PC-3 (cell line): ENCODE measurements at regions of chr12 and their contacts with region 1.

Region 1: GRCh38 chr12:39764944-39765560 is 145.4 kb upstream of the ABCD2 start:
- DNase-seq: peak; percentile 58
- ATAC-seq: peak; percentile 50
- H3K4me3 ChIP-seq: no peak overlapping the region
- H3K27ac ChIP-seq: no peak overlapping the region
- H3K4me1 ChIP-seq: no peaks in the 10 kb centered on the region
- H3K27me3 ChIP-seq: no peaks in the 10 kb centered on the region; the same call in 1 of the 2 replicates
- CTCF ChIP-seq: peak; percentile 91

Region 2: GRCh38 chr12:39587225-39587624 is 177.8 kb before region 1 on chr12:
- CTCF ChIA-PET with region 1: no interaction called
- POLR2A ChIA-PET with region 1: no interaction called
- intact Hi-C with region 1: loop called (anchors 5 kb)
- DNase-seq: peak; percentile 45
- ATAC-seq: peak; percentile 63; the same call in 1 of the 2 replicates
- H3K4me3 ChIP-seq: no peak overlapping the region
- H3K27ac ChIP-seq: no peak overlapping the region
- H3K4me1 ChIP-seq: peaks cover 6% of the 10 kb centered on the region
- H3K27me3 ChIP-seq: no peaks in the 10 kb centered on the region
- CTCF ChIP-seq: peak; percentile 52; the same call in 1 of the 2 replicates

Region 3: DNA sequence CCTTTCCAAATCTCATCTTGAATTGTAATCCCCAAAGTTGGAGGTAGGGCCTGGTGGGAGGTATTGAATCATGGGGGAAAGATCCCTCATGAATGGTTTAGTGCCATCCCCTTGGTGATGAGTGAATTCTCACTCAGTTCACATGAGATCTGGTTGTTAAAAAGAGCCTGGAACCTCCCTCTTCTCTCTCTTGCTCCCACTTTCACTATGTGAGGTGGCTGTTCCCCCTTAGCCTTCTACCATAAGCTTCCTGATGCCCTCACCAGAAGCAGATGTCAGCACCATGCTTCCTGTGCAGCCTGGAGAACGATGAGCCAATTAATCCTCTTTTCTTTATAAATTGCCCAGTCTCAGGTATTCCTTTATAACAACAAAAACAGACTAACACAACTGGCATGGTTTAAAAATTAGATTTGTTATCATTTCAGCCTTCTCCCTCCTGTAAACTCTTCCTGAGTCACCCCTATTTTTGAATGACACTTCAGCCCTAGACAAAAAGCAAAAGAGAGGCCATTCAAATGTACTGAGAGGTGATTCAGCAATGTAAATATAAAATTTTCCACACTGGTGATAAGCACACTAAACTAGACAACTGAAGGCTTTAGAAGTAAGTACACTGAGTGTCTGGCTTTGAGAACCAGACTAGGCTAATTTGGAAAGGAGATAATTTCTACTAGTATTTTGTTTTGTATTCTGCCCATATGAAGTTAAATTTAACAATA is 66.7 kb after region 1 on chr12:
- CTCF ChIA-PET with region 1: interaction called, 3 read pairs
- POLR2A ChIA-PET with region 1: no interaction called
- intact Hi-C with region 1: loop called (anchors 5 kb)
- DNase-seq: peak; percentile 75
- ATAC-seq: peak; percentile 94
- H3K4me3 ChIP-seq: no peak overlapping the region
- H3K27ac ChIP-seq: no peak overlapping the region
- H3K4me1 ChIP-seq: peaks cover 18% of the 10 kb centered on the region
- H3K27me3 ChIP-seq: no peaks in the 10 kb centered on the region
- CTCF ChIP-seq: no peak

Region 4: GRCh38 chr12:39958377-39958776 is 193.3 kb after region 1 on chr12:
- CTCF ChIA-PET with region 1: no interaction called
- POLR2A ChIA-PET with region 1: no interaction called
- intact Hi-C with region 1: loop called (anchors 1 kb)
- DNase-seq: peak; percentile 33
- ATAC-seq: peak; percentile 31; the same call in 1 of the 2 replicates
- H3K4me3 ChIP-seq: no peak overlapping the region
- H3K27ac ChIP-seq: no peak overlapping the region
- H3K4me1 ChIP-seq: no peaks in the 10 kb centered on the region
- H3K27me3 ChIP-seq: no peaks in the 10 kb centered on the region
- CTCF ChIP-seq: peak; percentile 56

Region 5: GRCh38 chr12:39990122-39991101 is 225.4 kb after region 1 on chr12:
- CTCF ChIA-PET with region 1: no interaction called
- POLR2A ChIA-PET with region 1: no interaction called
- intact Hi-C with region 1: loop called (anchors 1 kb)
- DNase-seq: peak; percentile 61
- ATAC-seq: peak; percentile 91
- H3K4me3 ChIP-seq: no peak overlapping the region
- H3K27ac ChIP-seq: no peak overlapping the region
- H3K4me1 ChIP-seq: no peaks in the 10 kb centered on the region
- H3K27me3 ChIP-seq: no peaks in the 10 kb centered on the region
- CTCF ChIP-seq: peak; percentile 86

Region 6: DNA sequence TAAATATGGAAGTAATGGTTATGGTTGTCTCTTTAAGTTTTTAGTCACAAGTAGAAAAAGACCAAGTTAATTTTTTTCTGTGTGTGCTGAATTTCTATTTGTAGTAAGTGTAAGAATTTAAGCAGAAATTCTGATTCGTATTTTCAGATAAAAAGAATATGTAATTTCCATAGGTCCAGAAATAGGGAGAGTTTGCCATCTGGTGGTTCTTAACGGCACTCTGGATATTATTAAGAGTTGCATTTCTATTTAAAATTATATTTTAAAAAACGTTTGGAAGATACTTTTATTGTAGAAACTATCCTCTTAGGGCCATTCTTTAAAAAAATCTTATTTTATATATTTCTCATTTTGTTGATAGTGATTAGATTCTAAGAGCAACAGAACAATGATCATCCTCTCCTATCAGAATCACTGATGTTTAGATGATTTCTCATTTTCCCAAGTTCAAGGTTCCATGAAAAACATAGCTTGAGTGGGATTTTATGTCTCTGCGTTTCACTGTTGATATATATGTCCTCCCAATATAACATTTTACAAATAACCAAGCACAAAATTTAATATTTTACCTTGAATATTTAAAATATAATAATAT is 548.0 kb after region 1 on chr12:
- CTCF ChIA-PET with region 1: no interaction called
- POLR2A ChIA-PET with region 1: no interaction called
- intact Hi-C with region 1: loop called (anchors 10 kb)
- DNase-seq: peak; percentile 38
- ATAC-seq: no peak
- H3K4me3 ChIP-seq: no peak overlapping the region
- H3K27ac ChIP-seq: no peak overlapping the region
- H3K4me1 ChIP-seq: no peaks in the 10 kb centered on the region
- H3K27me3 ChIP-seq: peaks cover 47% of the 10 kb centered on the region
- CTCF ChIP-seq: peak; percentile 60